Activated CD4-positive, alpha-beta memory T cell treated with anti-CD3 and anti-CD28 coated beads, Interleukin-2, amount 10 ng/mL, durations not matched to agents 7 days and 5 days (primary cell): ENCODE measurements at regions of chr7 and their contacts with region 1.

Region 1: GRCh38 chr7:120792091-120792860 is 65.7 kb downstream of the TSPAN12 start:
- DNase-seq: peak; percentile 58
- H3K4me3 Mint-ChIP-seq: no peak overlapping the region
- H3K27ac Mint-ChIP-seq: no peak overlapping the region
- H3K4me1 Mint-ChIP-seq: no peaks in the 10 kb centered on the region
- H3K27me3 Mint-ChIP-seq: peaks cover 5% of the 10 kb centered on the region

Region 2: GRCh38 chr7:120805636-120806388 is 13.5 kb after region 1 on chr7:
- CTCF ChIA-PET with region 1: interaction called, 19 read pairs
- POLR2A ChIA-PET with region 1: no interaction called
- DNase-seq: peak; percentile 45
- H3K4me3 Mint-ChIP-seq: no peak overlapping the region
- H3K27ac Mint-ChIP-seq: no peak overlapping the region
- H3K4me1 Mint-ChIP-seq: no peaks in the 10 kb centered on the region
- H3K27me3 Mint-ChIP-seq: no peaks in the 10 kb centered on the region

Region 3: GRCh38 chr7:120950539-120951308 is 158.4 kb after region 1 on chr7 and contains the start of gene ING3:
- CTCF ChIA-PET with region 1: interaction called, 10 read pairs
- POLR2A ChIA-PET with region 1: no interaction called
- DNase-seq: peak; percentile 98
- H3K4me3 Mint-ChIP-seq: peak within 1 kb of the TSS; percentile 97
- H3K27ac Mint-ChIP-seq: peak within 1 kb of the TSS; percentile 96
- H3K4me1 Mint-ChIP-seq: peaks cover 34% of the 10 kb centered on the region
- H3K27me3 Mint-ChIP-seq: peaks cover 5% of the 10 kb centered on the region
- total RNA-seq, gene ING3: 22.2 to 26.5 TPM

Region 4: GRCh38 chr7:120987683-120988590 is 195.7 kb after region 1 on chr7:
- CTCF ChIA-PET with region 1: no interaction called
- POLR2A ChIA-PET with region 1: no interaction called
- DNase-seq: peak; percentile 89
- H3K4me3 Mint-ChIP-seq: peak overlapping the region; percentile 65
- H3K27ac Mint-ChIP-seq: no peak overlapping the region
- H3K4me1 Mint-ChIP-seq: peaks cover 24% of the 10 kb centered on the region
- H3K27me3 Mint-ChIP-seq: peaks cover 50% of the 10 kb centered on the region

Region 5: DNA sequence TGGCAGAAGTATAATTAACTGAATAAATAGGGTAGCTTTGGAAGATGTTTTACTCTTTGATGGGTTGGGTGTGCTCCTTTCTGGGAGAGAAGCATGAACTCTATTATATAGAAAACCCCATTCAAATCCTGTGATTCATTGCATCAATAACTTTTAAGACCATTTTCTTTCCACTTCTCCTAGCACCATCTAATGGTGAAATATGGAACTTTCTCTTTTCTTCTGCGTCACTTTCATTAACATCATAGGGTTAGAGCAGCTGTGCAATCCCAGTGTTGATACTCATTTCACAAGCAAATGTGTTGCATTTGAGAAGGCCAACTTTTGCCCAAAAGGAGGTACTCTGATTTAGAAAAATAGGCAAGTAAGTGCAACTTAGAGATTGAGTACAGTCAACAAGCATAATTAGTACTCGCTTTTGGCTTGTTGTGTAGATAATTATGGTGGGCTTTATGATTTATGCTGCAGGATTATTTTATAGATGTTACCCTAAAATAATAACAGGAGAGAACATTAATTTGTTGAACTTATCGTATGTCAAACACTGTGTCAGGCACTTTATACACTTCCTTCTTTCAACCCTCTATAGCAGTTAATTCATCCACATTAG is 289.2 kb after region 1 on chr7:
- CTCF ChIA-PET with region 1: interaction called, 14 read pairs
- POLR2A ChIA-PET with region 1: no interaction called
- DNase-seq: no peak
- H3K4me3 Mint-ChIP-seq: no peak overlapping the region
- H3K27ac Mint-ChIP-seq: no peak overlapping the region
- H3K4me1 Mint-ChIP-seq: no peaks in the 10 kb centered on the region
- H3K27me3 Mint-ChIP-seq: peaks cover 26% of the 10 kb centered on the region